CD8-positive, alpha-beta T cell (primary cell): ENCODE measurements at regions of chr19 and their contacts with region 1.

Region 1: GRCh38 chr19:4916292-4917082 is 7.2 kb downstream of the UHRF1 start:
- DNase-seq: peak; percentile 19 to 82 (median 64)
- ATAC-seq: peak; percentile 30
- H3K4me3 ChIP-seq: peak overlapping the region; percentile 96 to 100
- H3K4me3 Mint-ChIP-seq: peak overlapping the region; percentile 99
- H3K27ac ChIP-seq: peak overlapping the region; percentile 90 to 96
- H3K27ac Mint-ChIP-seq: peak overlapping the region; percentile 100
- H3K4me1 ChIP-seq: peaks cover 34% of the 10 kb centered on the region
- H3K4me1 Mint-ChIP-seq: peaks cover 41% of the 10 kb centered on the region
- H3K27me3 ChIP-seq: no peaks in the 10 kb centered on the region
- H3K27me3 Mint-ChIP-seq: no peaks in the 10 kb centered on the region
- CTCF ChIP-seq: no peak

Region 2: GRCh38 chr19:4781801-4782200 is 134.7 kb before region 1 on chr19:
- CTCF ChIA-PET with region 1: no interaction called
- POLR2A ChIA-PET with region 1: no interaction called
- intact Hi-C with region 1: no loop called
- DNase-seq: no peak
- ATAC-seq: no peak
- H3K4me3 ChIP-seq: no peak overlapping the region
- H3K4me3 Mint-ChIP-seq: no peak overlapping the region
- H3K27ac ChIP-seq: no peak overlapping the region
- H3K27ac Mint-ChIP-seq: no peak overlapping the region
- H3K4me1 ChIP-seq: no peaks in the 10 kb centered on the region
- H3K4me1 Mint-ChIP-seq: no peaks in the 10 kb centered on the region
- H3K27me3 ChIP-seq: no peaks in the 10 kb centered on the region
- H3K27me3 Mint-ChIP-seq: peaks cover 12% of the 10 kb centered on the region
- CTCF ChIP-seq: no peak

Region 3: DNA sequence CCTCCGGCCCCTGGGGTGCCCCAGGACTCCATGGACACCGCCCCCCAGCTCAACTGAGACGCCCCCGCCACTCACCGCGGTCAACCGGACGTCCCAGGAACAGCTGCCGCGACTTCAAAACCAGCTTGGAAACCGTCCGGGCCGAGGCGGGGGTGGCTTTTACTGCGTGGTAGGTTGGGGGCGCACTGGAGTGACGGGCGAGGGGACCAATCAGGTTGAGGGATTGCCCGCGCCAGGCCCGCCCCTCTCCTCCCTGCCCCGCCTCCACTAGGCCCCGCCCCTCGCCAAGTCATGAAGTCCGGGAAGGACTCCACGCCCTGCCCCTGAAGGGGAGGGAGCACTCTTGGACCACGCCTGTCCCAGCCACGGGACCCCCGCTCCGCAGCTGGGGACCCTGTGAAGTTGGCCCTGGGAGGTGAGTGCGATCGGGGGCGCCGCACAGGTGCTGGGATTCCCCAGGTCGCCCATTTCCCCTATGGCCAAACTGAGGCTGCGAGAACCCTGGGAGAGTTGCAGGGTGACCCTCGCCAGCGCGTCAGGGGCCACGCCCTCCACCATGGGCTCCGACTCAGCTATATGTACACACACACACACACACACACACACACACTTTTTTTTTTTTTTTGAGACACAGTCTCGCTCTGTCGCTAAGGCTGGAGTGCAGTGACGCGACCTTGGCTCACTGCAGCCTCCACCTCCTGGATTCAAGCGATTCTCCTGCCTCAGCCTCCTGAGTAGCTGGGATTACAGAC is 48.8 kb before region 1 on chr19 and contains the start of gene PLIN3:
- CTCF ChIA-PET with region 1: interaction called, 162 read pairs
- POLR2A ChIA-PET with region 1: interaction called, 13 read pairs
- intact Hi-C with region 1: loop called (anchors 1 kb)
- DNase-seq: peak; percentile 74 to 91 (median 87)
- ATAC-seq: peak; percentile 94
- H3K4me3 ChIP-seq: peak within 1 kb of the TSS; percentile 72 to 78
- H3K4me3 Mint-ChIP-seq: peak within 1 kb of the TSS; percentile 78
- H3K27ac ChIP-seq: peak within 1 kb of the TSS; percentile 30 to 55
- H3K27ac Mint-ChIP-seq: peak within 1 kb of the TSS; percentile 49
- H3K4me1 ChIP-seq: peaks cover 17% of the 10 kb centered on the region
- H3K4me1 Mint-ChIP-seq: peaks cover 16% of the 10 kb centered on the region
- H3K27me3 ChIP-seq: no peaks in the 10 kb centered on the region
- H3K27me3 Mint-ChIP-seq: no peaks in the 10 kb centered on the region
- CTCF ChIP-seq: no peak
- total RNA-seq, gene PLIN3: 16.2 to 16.7 TPM

Region 4: GRCh38 chr19:4929186-4929585 is 12.7 kb after region 1 on chr19:
- CTCF ChIA-PET with region 1: interaction called, 11 read pairs
- POLR2A ChIA-PET with region 1: no interaction called
- intact Hi-C with region 1: no loop called
- DNase-seq: no peak
- ATAC-seq: no peak
- H3K4me3 ChIP-seq: no peak overlapping the region
- H3K4me3 Mint-ChIP-seq: no peak overlapping the region
- H3K27ac ChIP-seq: no peak overlapping the region
- H3K27ac Mint-ChIP-seq: no peak overlapping the region
- H3K4me1 ChIP-seq: no peaks in the 10 kb centered on the region
- H3K4me1 Mint-ChIP-seq: no peaks in the 10 kb centered on the region
- H3K27me3 ChIP-seq: no peaks in the 10 kb centered on the region
- H3K27me3 Mint-ChIP-seq: no peaks in the 10 kb centered on the region
- CTCF ChIP-seq: no peak

Region 5: DNA sequence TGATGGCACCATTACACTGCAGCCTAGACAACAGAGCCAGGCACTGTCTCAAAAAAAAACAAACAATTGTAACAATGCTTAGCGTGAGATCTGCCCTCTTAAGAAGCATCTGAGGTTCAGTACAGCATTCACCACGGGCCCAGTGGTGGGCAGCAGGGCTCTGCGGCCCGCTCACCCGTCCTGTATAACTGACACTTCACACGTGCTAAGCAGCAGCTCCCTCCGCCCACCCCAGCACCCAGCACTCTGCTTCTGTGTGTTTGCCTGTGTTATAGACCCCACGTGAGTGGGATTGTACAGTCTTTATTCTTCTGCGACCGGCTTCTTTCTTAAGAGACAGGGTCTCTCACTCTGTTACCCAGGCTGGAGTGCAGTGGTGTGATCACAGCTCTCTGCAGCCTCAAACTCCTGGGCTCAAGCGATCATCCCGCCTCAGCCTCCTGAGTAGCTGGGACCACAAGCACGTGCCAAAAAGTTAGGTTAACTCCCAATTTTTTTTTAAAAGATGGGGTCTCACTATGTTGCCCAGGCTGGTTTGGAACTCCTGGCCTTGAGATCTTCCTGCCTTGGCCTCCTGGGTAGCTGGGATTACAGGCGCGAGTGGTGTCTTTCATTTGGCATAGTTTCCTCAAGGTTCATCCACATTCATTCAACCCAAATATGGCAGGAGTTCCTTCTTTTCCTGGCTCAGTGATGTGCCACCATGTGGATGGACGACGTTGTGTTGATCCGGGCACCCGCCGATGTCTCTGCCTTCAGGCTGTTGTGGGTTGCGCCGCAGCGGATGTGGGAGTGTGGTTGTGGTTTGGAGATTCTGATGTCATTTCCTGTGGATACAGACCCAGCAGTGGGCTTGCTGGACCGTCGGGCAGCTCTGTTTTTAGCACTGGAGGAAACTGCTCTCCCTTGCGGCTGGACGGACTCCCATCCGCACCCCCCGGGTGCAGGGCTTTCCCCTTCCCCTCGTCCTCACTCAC is 222.4 kb after region 1 on chr19:
- CTCF ChIA-PET with region 1: no interaction called
- POLR2A ChIA-PET with region 1: no interaction called
- intact Hi-C with region 1: loop called in 1 of 2 experiments (anchors 5 kb)
- DNase-seq: peak; percentile 53 to 90 (median 80)
- ATAC-seq: peak; percentile 56
- H3K4me3 ChIP-seq: peak overlapping the region; percentile 20 to 31
- H3K4me3 Mint-ChIP-seq: peak overlapping the region; percentile 74
- H3K27ac ChIP-seq: no peak overlapping the region
- H3K27ac Mint-ChIP-seq: peak overlapping the region; percentile 92
- H3K4me1 ChIP-seq: peaks cover 47% of the 10 kb centered on the region
- H3K4me1 Mint-ChIP-seq: peaks cover 51% of the 10 kb centered on the region
- H3K27me3 ChIP-seq: no peaks in the 10 kb centered on the region
- H3K27me3 Mint-ChIP-seq: no peaks in the 10 kb centered on the region
- CTCF ChIP-seq: peak; percentile 20

Region 6: DNA sequence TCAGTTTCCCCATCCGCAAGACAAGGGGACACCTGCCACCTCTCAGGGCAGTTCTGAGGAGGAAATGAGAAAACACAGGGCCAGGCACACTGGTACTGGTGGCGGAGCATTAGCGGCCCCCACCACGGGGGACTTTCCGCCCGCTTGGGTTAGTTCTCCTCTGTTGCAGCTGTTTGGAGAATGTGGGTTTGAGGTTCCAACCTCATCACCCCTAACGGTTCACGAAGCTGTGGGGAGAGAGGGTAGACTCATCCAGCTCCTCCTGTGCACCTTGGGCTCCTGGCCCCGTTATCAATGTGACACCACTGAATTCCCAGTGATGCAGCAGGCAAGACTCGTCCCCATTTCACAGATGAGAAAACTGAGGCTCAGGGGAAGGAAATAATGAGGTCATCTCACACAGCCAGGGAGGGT is 413.8 kb after region 1 on chr19:
- CTCF ChIA-PET with region 1: no interaction called
- POLR2A ChIA-PET with region 1: no interaction called
- intact Hi-C with region 1: no loop called
- DNase-seq: no peak
- ATAC-seq: no peak
- H3K4me3 ChIP-seq: no peak overlapping the region
- H3K4me3 Mint-ChIP-seq: no peak overlapping the region
- H3K27ac ChIP-seq: no peak overlapping the region
- H3K27ac Mint-ChIP-seq: no peak overlapping the region
- H3K4me1 ChIP-seq: no peaks in the 10 kb centered on the region
- H3K4me1 Mint-ChIP-seq: peaks cover 3% of the 10 kb centered on the region
- H3K27me3 ChIP-seq: peaks cover 0 to 12% of the 10 kb centered on the region in 2 experiments
- H3K27me3 Mint-ChIP-seq: peaks cover 26% of the 10 kb centered on the region
- CTCF ChIP-seq: no peak